Naive thymus-derived CD4-positive, alpha-beta T cell (primary cell): ENCODE measurements at regions of chr14 and their contacts with region 1.

Region 1: GRCh38 chr14:55051426-55052268 is at the start of gene MAPK1IP1L:
- DNase-seq: peak; percentile 86 to 99 (median 92)
- ATAC-seq: peak; percentile 97
- H3K4me3 ChIP-seq: peak within 1 kb of the TSS; percentile 93
- H3K4me3 Mint-ChIP-seq: peak within 1 kb of the TSS; percentile 88 to 94 (median 92)
- H3K27ac ChIP-seq: peak within 1 kb of the TSS; percentile 100
- H3K27ac Mint-ChIP-seq: peak within 1 kb of the TSS; percentile 87 to 97 (median 96)
- H3K4me1 ChIP-seq: peaks cover 26 to 32% of the 10 kb centered on the region in 2 donors
- H3K4me1 Mint-ChIP-seq: peaks cover 17 to 54% (median 39%) of the 10 kb centered on the region in 7 donors
- H3K27me3 ChIP-seq: no peaks in the 10 kb centered on the region
- H3K27me3 Mint-ChIP-seq: no peaks in the 10 kb centered on the region
- total RNA-seq, gene MAPK1IP1L: 65.1 to 143 (median 111) TPM

Region 2: DNA sequence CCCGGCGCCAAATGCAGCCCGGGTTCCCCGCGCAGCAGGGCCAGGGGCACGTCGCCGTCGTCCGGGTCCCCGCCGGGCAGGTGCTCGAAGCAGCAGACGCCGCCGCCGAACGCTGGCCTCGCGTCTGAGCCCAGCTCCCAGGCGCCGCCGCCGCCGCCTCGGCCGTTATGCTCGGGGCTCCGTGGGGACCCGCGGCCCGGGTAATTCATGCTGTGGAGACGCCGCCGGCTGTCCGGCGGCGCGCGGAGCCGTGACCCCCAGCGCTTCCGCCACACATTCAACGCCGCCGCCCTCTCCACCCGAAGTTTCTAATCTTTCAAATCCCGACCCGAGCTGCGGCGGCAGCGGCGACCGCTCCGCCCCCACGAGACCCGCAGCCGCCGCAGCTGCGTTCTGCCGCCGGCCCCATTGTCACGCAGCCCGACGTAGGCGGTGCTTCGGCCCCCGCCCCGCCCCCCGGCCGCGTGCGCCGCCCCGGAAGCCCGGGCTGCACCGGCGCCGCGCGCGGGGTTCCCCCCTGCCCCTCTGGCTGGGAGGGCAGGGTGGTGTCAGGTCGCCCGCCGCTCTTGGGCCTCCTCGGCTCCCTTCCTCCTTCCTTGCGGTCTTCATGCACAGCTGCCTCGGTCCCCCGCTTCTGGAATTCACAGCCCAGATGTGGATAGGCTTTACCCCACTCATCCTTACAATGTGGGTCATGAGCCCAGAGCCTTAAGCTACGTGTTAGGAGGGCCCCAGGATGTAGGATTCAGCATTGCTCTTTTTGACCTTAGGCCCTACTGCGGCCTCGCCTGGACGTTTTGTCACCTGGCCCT is 1898.6 kb before region 1 on chr14 and contains the start of gene DDHD1:
- CTCF ChIA-PET with region 1: no interaction called
- POLR2A ChIA-PET with region 1: no interaction called
- intact Hi-C with region 1: loop called in 1 of 2 experiments (anchors 10 kb)
- DNase-seq: peak; percentile 76 to 88 (median 85)
- ATAC-seq: peak; percentile 95
- H3K4me3 ChIP-seq: peak within 1 kb of the TSS; percentile 86
- H3K4me3 Mint-ChIP-seq: peak within 1 kb of the TSS; percentile 95 to 100 (median 98)
- H3K27ac ChIP-seq: peak within 1 kb of the TSS; percentile 87
- H3K27ac Mint-ChIP-seq: peak within 1 kb of the TSS; percentile 94 to 99 (median 98)
- H3K4me1 ChIP-seq: peaks cover 32 to 34% of the 10 kb centered on the region in 2 donors
- H3K4me1 Mint-ChIP-seq: peaks cover 34 to 55% (median 51%) of the 10 kb centered on the region in 7 donors
- H3K27me3 ChIP-seq: no peaks in the 10 kb centered on the region
- H3K27me3 Mint-ChIP-seq: no peaks in the 10 kb centered on the region
- total RNA-seq, gene DDHD1: 46.7 to 103 (median 55.5) TPM

Region 3: GRCh38 chr14:54902521-54903420 is 148.9 kb before region 1 on chr14 and contains the start of gene GCH1:
- CTCF ChIA-PET with region 1: interaction called, 4 read pairs
- POLR2A ChIA-PET with region 1: interaction called, 3 read pairs
- intact Hi-C with region 1: loop called (anchors 1 to 10 kb)
- DNase-seq: peak; percentile 63 to 85 (median 71)
- ATAC-seq: peak; percentile 88
- H3K4me3 ChIP-seq: peak within 1 kb of the TSS; percentile 99
- H3K4me3 Mint-ChIP-seq: peak within 1 kb of the TSS; percentile 82 to 94 (median 90)
- H3K27ac ChIP-seq: peak within 1 kb of the TSS; percentile 88
- H3K27ac Mint-ChIP-seq: peak within 1 kb of the TSS; percentile 66 to 95 (median 91)
- H3K4me1 ChIP-seq: peaks cover under 1 to 9% of the 10 kb centered on the region in 2 donors
- H3K4me1 Mint-ChIP-seq: peaks cover 15 to 43% (median 31%) of the 10 kb centered on the region in 7 donors
- H3K27me3 ChIP-seq: no peaks in the 10 kb centered on the region
- H3K27me3 Mint-ChIP-seq: no peaks in the 10 kb centered on the region
- total RNA-seq, gene GCH1: 21.4 to 64.1 (median 23.2) TPM

Region 4: GRCh38 chr14:54955143-54955542 is 96.5 kb before region 1 on chr14:
- CTCF ChIA-PET with region 1: no interaction called
- POLR2A ChIA-PET with region 1: no interaction called
- intact Hi-C with region 1: no loop called
- DNase-seq: no peak
- ATAC-seq: no peak
- H3K4me3 ChIP-seq: no peak overlapping the region
- H3K4me3 Mint-ChIP-seq: no peak overlapping the region
- H3K27ac ChIP-seq: no peak overlapping the region
- H3K27ac Mint-ChIP-seq: no peak overlapping the region
- H3K4me1 ChIP-seq: no peaks in the 10 kb centered on the region
- H3K4me1 Mint-ChIP-seq: no peaks in the 10 kb centered on the region
- H3K27me3 ChIP-seq: no peaks in the 10 kb centered on the region
- H3K27me3 Mint-ChIP-seq: no peaks in the 10 kb centered on the region

Region 5: GRCh38 chr14:55094321-55095157 is 42.9 kb after region 1 on chr14:
- CTCF ChIA-PET with region 1: interaction called, 3 read pairs
- POLR2A ChIA-PET with region 1: no interaction called
- intact Hi-C with region 1: loop called (anchors 1 kb)
- DNase-seq: no peak
- ATAC-seq: no peak
- H3K4me3 ChIP-seq: no peak overlapping the region
- H3K4me3 Mint-ChIP-seq: no peak overlapping the region
- H3K27ac ChIP-seq: no peak overlapping the region
- H3K27ac Mint-ChIP-seq: no peak overlapping the region
- H3K4me1 ChIP-seq: peaks cover 0 to 14% of the 10 kb centered on the region in 2 donors
- H3K4me1 Mint-ChIP-seq: peaks cover 12 to 43% (median 16%) of the 10 kb centered on the region in 7 donors
- H3K27me3 ChIP-seq: no peaks in the 10 kb centered on the region
- H3K27me3 Mint-ChIP-seq: peaks cover 0 to 4% (median 0%) of the 10 kb centered on the region in 5 donors

Region 6: DNA sequence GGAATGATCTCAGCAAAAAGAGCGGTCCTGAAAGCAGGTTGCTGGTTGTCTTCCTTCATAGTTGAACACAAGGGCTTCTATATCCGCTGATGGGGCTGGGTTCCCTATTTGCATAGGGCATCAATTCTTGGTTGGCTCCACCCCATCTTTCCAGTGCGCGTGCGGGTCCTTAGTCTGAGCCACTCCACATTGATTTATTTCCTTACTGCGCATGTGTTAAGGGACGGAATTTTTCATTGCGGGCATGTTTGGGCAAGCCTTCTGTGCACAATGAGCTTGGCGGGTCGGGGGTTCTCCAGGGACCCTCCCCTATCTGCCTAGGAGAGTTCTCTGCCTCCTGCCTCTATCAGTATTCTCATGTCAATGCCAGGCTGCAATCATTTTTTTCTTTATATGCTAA is 161.0 kb after region 1 on chr14:
- CTCF ChIA-PET with region 1: no interaction called
- POLR2A ChIA-PET with region 1: interaction called, 4 read pairs
- intact Hi-C with region 1: loop called in 1 of 2 experiments (anchors 1 kb)
- DNase-seq: no peak
- ATAC-seq: no peak
- H3K4me3 ChIP-seq: no peak overlapping the region
- H3K4me3 Mint-ChIP-seq: no peak overlapping the region
- H3K27ac ChIP-seq: no peak overlapping the region
- H3K27ac Mint-ChIP-seq: no peak overlapping the region
- H3K4me1 ChIP-seq: no peaks in the 10 kb centered on the region
- H3K4me1 Mint-ChIP-seq: peaks cover 0 to 5% (median 5%) of the 10 kb centered on the region in 7 donors
- H3K27me3 ChIP-seq: no peaks in the 10 kb centered on the region
- H3K27me3 Mint-ChIP-seq: peaks cover 0 to 11% (median 0%) of the 10 kb centered on the region in 5 donors

Region 7: GRCh38 chr14:55430024-55430690 is 378.5 kb after region 1 on chr14:
- CTCF ChIA-PET with region 1: no interaction called
- POLR2A ChIA-PET with region 1: no interaction called
- intact Hi-C with region 1: loop called in 1 of 2 experiments (anchors 1 kb)
- DNase-seq: peak in 7 of 9 donors; percentile 65 to 83 (median 77)
- ATAC-seq: peak; percentile 94
- H3K4me3 ChIP-seq: no peak overlapping the region
- H3K4me3 Mint-ChIP-seq: no peak overlapping the region
- H3K27ac ChIP-seq: peak overlapping the region; percentile 10
- H3K27ac Mint-ChIP-seq: peak overlapping the region in 8 of 9 donors; percentile 2 to 93 (median 70)
- H3K4me1 ChIP-seq: peaks cover 15 to 32% of the 10 kb centered on the region in 2 donors
- H3K4me1 Mint-ChIP-seq: peaks cover 18 to 48% (median 39%) of the 10 kb centered on the region in 7 donors
- H3K27me3 ChIP-seq: no peaks in the 10 kb centered on the region
- H3K27me3 Mint-ChIP-seq: no peaks in the 10 kb centered on the region